ENCODE measurements at regions of chr12 and their contacts with region 1.

Region 1: DNA sequence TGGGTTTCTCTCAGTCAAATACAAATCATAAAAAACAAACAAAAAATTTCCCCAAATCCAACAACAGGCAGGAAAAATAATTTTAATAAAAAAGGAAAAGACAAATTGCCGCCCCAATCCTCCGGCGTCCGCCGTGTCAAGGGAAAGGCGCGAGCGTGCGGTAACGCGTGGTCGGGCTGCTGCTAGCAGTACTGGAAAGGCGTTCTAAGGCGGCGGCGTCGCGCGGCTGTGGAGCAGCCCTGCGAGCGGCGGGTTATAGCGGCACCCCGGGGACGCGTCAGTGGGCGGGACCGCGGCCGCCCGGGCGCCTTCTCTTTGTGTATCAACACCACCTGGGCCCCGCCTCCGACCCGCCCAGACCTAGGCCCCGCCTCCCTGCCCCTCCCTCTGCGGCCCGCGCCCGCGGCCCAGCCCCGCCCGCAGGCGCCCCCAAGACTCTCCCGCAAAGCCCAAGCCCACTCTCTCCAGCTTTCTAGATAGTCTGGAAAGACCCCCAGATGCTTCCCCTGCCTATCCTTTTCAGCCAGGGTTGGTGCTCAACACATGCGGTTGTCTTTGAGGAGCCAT is at the start of gene SLC38A2:
- DNase-seq: peak; percentile 97
- ATAC-seq: peak; percentile 84
- H3K4me3 ChIP-seq: peak within 1 kb of the TSS; percentile 80 to 99 (median 97)
- H3K4me3 Mint-ChIP-seq: peak within 1 kb of the TSS; percentile 98
- H3K27ac ChIP-seq: peak within 1 kb of the TSS; percentile 90 to 91
- H3K27ac Mint-ChIP-seq: peak within 1 kb of the TSS; percentile 99
- H3K4me1 ChIP-seq: peaks cover 39 to 40% of the 10 kb centered on the region in 2 donors
- H3K4me1 Mint-ChIP-seq: peaks cover 45% of the 10 kb centered on the region
- H3K27me3 ChIP-seq: no peaks in the 10 kb centered on the region
- H3K27me3 Mint-ChIP-seq: no peaks in the 10 kb centered on the region
- CTCF ChIP-seq: no peak
- total RNA-seq, gene SLC38A2: 202 TPM in 2 replicates

Region 2: GRCh38 chr12:45728630-45729232 is 643.9 kb before region 1 on chr12:
- CTCF ChIA-PET with region 1: no interaction called
- POLR2A ChIA-PET with region 1: no interaction called
- intact Hi-C with region 1: loop called (anchors 5 kb)
- DNase-seq: peak; percentile 98
- ATAC-seq: peak; percentile 68
- H3K4me3 ChIP-seq: peak overlapping the region; percentile 87 to 98 (median 95)
- H3K4me3 Mint-ChIP-seq: peak overlapping the region; percentile 100
- H3K27ac ChIP-seq: peak overlapping the region; percentile 98 to 99
- H3K27ac Mint-ChIP-seq: peak overlapping the region; percentile 99
- H3K4me1 ChIP-seq: peaks cover 16 to 38% of the 10 kb centered on the region in 2 donors
- H3K4me1 Mint-ChIP-seq: peaks cover 36% of the 10 kb centered on the region
- H3K27me3 ChIP-seq: no peaks in the 10 kb centered on the region
- H3K27me3 Mint-ChIP-seq: no peaks in the 10 kb centered on the region
- CTCF ChIP-seq: peak; percentile 93

Region 3: GRCh38 chr12:46217541-46218321 is 154.9 kb before region 1 on chr12:
- CTCF ChIA-PET with region 1: no interaction called
- POLR2A ChIA-PET with region 1: no interaction called
- intact Hi-C with region 1: loop called (anchors 5 kb)
- DNase-seq: peak; percentile 87
- ATAC-seq: peak; percentile 70
- H3K4me3 ChIP-seq: peak overlapping the region in 4 of 5 experiments; percentile 16 to 59 (median 32)
- H3K4me3 Mint-ChIP-seq: peak overlapping the region; percentile 69
- H3K27ac ChIP-seq: peak overlapping the region; percentile 83 to 96
- H3K27ac Mint-ChIP-seq: peak overlapping the region; percentile 86
- H3K4me1 ChIP-seq: peaks cover 94 to 97% of the 10 kb centered on the region in 2 donors
- H3K4me1 Mint-ChIP-seq: peaks cover 94% of the 10 kb centered on the region
- H3K27me3 ChIP-seq: no peaks in the 10 kb centered on the region
- H3K27me3 Mint-ChIP-seq: no peaks in the 10 kb centered on the region
- CTCF ChIP-seq: no peak

Region 4: DNA sequence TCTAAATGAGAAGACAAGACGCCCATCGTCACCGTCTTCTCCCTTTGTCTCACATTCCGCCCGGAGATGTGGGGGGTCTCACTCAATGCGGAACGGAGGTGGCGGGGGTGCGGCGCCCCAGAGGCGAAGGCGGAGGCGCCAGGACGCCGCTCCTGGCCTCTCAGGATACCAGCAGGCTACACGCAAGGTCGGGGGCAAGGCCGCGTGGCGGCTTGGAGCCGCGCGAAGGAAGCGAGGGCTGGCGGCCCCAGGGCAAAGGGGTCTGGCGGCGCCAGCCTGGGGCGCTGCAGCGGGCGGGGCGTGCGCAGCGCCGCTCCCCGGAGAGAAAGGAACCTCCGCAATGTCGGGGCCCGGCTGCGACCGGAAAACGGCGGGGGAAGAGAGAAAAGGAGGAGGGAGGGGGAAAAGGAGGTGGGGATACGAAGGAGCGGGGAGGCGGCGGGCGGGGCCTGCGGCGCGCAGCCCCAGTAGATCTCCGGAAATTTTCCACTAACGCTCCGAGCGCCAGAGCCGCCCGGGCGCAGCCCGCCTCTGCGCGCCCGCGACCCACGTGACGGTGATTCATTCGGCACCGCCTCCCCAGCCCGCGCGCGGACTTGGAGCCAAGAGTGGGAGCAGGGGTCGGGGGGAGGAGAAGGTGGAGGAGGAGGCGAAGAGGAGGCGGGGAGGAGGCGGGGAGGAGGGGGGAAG is 10.5 kb after region 1 on chr12:
- CTCF ChIA-PET with region 1: interaction called, 10 read pairs
- POLR2A ChIA-PET with region 1: interaction called, 26 read pairs
- intact Hi-C with region 1: loop called (anchors 1 kb)
- DNase-seq: peak; percentile 94
- ATAC-seq: peak; percentile 69
- H3K4me3 ChIP-seq: peak overlapping the region; percentile 49 to 94 (median 84)
- H3K4me3 Mint-ChIP-seq: peak overlapping the region; percentile 90
- H3K27ac ChIP-seq: peak overlapping the region; percentile 94 to 97
- H3K27ac Mint-ChIP-seq: peak overlapping the region; percentile 98
- H3K4me1 ChIP-seq: peaks cover 38 to 44% of the 10 kb centered on the region in 2 donors
- H3K4me1 Mint-ChIP-seq: peaks cover 46% of the 10 kb centered on the region
- H3K27me3 ChIP-seq: no peaks in the 10 kb centered on the region
- H3K27me3 Mint-ChIP-seq: no peaks in the 10 kb centered on the region
- CTCF ChIP-seq: no peak

Region 5: DNA sequence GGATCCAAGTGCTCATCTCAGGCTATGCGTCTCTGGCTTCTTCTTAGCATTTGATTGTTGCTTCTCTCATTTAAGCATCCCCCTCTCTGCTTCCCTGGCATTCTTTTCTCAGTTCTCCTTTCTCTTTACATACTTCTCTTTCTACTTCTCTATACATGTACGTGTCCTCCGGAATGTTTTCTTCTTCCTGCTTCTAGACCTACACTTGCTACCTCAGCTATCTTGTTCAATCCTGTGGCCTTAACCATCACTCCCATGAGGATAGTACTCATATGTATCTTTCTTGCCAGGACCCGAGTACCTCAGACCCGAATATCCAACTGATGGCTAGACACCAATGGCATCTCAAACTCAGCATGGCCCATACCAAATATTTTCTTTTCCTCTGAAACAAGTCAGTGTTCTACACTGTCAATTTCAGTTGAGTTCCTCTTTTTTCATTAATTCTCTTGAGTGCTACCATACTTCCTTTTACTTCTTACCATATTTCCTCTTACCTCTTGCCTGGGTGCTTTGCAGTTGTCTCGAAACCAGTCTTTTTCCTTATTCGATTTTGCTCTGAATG is 115.0 kb after region 1 on chr12:
- CTCF ChIA-PET with region 1: no interaction called
- POLR2A ChIA-PET with region 1: no interaction called
- intact Hi-C with region 1: loop called (anchors 5 kb)
- DNase-seq: peak; percentile 87
- ATAC-seq: peak; percentile 89
- H3K4me3 ChIP-seq: peak overlapping the region; percentile 7 to 30 (median 27)
- H3K4me3 Mint-ChIP-seq: no peak overlapping the region
- H3K27ac ChIP-seq: peak overlapping the region; percentile 67 to 85
- H3K27ac Mint-ChIP-seq: no peak overlapping the region
- H3K4me1 ChIP-seq: peaks cover 29 to 32% of the 10 kb centered on the region in 2 donors
- H3K4me1 Mint-ChIP-seq: peaks cover 10% of the 10 kb centered on the region
- H3K27me3 ChIP-seq: no peaks in the 10 kb centered on the region
- H3K27me3 Mint-ChIP-seq: no peaks in the 10 kb centered on the region
- CTCF ChIP-seq: peak; percentile 14

Region 6: DNA sequence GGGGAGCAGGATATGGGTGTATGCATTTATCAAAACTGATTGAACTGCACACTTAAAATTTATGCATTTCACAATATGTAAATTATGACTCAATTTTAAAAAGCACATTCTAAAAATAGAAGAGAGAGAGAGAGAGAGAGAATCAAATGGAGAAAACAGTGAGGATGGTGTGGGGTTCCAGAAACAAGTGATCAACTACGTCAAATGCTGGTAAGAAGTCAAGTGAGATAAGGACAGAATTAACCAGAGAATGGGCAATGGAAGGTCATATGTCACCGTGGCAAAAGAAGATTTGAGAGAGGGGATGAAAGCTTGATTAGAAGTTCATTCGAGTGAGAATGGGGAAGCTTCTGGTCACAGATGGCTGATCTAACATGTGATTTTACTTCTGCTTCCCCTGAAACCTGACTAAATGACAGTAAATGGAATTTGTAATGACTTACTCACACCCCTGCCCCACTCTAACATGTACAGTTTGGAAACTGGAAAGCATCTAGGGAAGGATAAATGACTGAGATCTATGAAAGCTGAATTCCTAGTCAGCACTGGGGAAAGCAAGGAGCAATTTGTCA is 983.6 kb after region 1 on chr12:
- CTCF ChIA-PET with region 1: no interaction called
- POLR2A ChIA-PET with region 1: no interaction called
- intact Hi-C with region 1: loop called (anchors 5 kb)
- DNase-seq: peak; percentile 93
- ATAC-seq: peak; percentile 77
- H3K4me3 ChIP-seq: peak overlapping the region in 1 of 5 experiments; percentile 31
- H3K4me3 Mint-ChIP-seq: peak overlapping the region; percentile 74
- H3K27ac ChIP-seq: peak overlapping the region; percentile 91 to 95
- H3K27ac Mint-ChIP-seq: peak overlapping the region; percentile 98
- H3K4me1 ChIP-seq: peaks cover 71 to 80% of the 10 kb centered on the region in 2 donors
- H3K4me1 Mint-ChIP-seq: peaks cover 78% of the 10 kb centered on the region
- H3K27me3 ChIP-seq: no peaks in the 10 kb centered on the region
- H3K27me3 Mint-ChIP-seq: no peaks in the 10 kb centered on the region
- CTCF ChIP-seq: no peak